ENCODE measurements at regions of chr1 and their contacts with region 1.

Region 1: GRCh38 chr1:20493839-20494608 is 8.0 kb upstream of the CAMK2N1 start:
- DNase-seq: peak; percentile 78 to 89 (median 84)
- ATAC-seq: peak; percentile 90
- H3K4me3 ChIP-seq: no peak overlapping the region
- H3K27ac ChIP-seq: peak overlapping the region in 1 of 2 donors; percentile 4
- H3K4me1 ChIP-seq: peaks cover 6 to 29% of the 10 kb centered on the region in 2 donors
- H3K27me3 ChIP-seq: peaks cover 0 to 36% of the 10 kb centered on the region in 2 donors
- CTCF ChIP-seq: peak; percentile 91 to 99

Region 2: DNA sequence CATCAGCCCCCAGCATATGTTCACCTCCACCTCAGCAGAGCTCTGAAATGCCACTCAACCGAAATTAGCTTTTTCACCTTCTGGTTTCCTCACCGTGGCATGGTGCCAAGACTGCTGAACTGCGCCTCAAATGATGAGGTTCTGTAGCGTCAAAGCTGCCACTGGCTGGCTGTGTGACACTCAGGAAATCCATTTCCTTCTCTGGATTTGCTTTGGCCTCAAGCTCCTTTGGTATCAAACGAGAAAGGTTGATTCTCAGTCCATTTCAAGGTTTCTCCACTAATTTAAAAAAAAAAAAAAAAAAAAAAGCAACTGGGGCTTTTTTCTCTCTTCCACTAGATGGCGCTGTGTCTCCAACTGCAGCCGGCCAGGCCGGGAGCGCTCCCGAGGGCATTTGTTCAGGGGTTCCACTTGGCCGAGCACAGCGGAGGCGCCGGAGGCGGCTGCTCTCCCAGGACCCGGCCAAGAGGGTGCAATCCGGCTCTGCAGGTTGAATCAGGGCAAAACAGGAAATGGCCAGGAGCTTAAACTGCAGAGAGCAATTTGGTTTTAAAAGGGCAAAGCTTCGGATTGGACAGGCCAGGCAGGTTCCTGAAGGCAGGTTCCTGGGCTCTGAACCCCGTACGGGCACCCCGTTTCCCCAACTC is 281.2 kb before region 1 on chr1:
- intact Hi-C with region 1: loop called in 1 of 2 experiments (anchors 5 kb)
- DNase-seq: peak; percentile 42 to 86 (median 72)
- ATAC-seq: peak; percentile 95
- H3K4me3 ChIP-seq: no peak overlapping the region
- H3K27ac ChIP-seq: no peak overlapping the region
- H3K4me1 ChIP-seq: peaks cover 0 to 12% of the 10 kb centered on the region in 2 donors
- H3K27me3 ChIP-seq: peaks cover 0 to 80% of the 10 kb centered on the region in 2 donors
- CTCF ChIP-seq: peak; percentile 65 to 75

Measured in left lung (tissue), 14 donors.